Common myeloid progenitor, CD34-positive (primary cell): ENCODE measurements at regions of chr3 and their contacts with region 1.

Region 1: DNA sequence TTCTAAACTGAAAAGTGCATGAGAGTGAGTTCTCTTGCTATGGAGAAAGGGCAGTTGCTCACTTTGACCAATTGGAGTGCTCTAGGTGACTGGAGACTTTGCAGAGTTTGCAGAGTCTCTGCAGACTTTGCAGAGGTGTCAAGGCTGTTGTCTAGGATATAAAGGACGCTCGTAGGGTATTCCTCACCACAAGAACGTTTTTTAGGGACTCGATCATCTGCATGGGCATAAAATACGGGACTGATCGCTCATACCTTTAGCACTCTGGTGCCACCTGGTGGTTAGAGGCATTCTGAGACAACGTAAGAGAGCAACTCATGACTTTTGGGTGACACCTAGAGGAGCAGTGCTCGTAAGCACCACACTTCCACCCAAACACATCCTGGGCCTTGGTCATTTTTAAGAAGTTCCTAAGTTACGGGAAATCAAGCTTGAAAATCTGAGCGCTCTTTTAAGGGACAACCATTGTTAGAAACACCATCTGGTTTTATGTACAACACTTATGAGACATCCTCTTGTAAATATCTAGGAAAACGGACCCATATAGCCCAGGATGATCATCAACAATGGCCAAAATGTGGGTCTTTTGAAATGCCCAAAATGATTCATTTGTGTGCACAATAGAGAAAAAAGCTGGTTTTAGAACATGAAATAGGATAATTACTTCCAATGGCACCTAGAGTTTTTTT is 51.6 kb upstream of the XCR1 start:
- DNase-seq: peak; percentile 91 to 95 (median 92)
- H3K4me3 ChIP-seq: peak overlapping the region in 4 of 7 experiments; percentile 32 to 59 (median 48)
- H3K27ac ChIP-seq: no peak overlapping the region
- H3K4me1 ChIP-seq: peaks cover 0 to 2% (median 0%) of the 10 kb centered on the region in 4 experiments
- H3K27me3 ChIP-seq: no peaks in the 10 kb centered on the region

Region 2: GRCh38 chr3:45938864-45939263 is 140.0 kb before region 1 on chr3:
- CTCF ChIA-PET with region 1: interaction called, 212 read pairs
- POLR2A ChIA-PET with region 1: interaction called, 5 read pairs
- DNase-seq: peak; percentile 87 to 94 (median 91)
- H3K4me3 ChIP-seq: no peak overlapping the region
- H3K27ac ChIP-seq: no peak overlapping the region
- H3K4me1 ChIP-seq: peaks cover 0 to 20% (median 10%) of the 10 kb centered on the region in 4 experiments
- H3K27me3 ChIP-seq: no peaks in the 10 kb centered on the region

Region 3: GRCh38 chr3:45976191-45977091 is 102.4 kb before region 1 on chr3:
- CTCF ChIA-PET with region 1: interaction called, 20 read pairs
- POLR2A ChIA-PET with region 1: no interaction called
- DNase-seq: no peak
- H3K4me3 ChIP-seq: no peak overlapping the region
- H3K27ac ChIP-seq: no peak overlapping the region
- H3K4me1 ChIP-seq: peaks cover 7 to 36% (median 26%) of the 10 kb centered on the region in 4 experiments
- H3K27me3 ChIP-seq: no peaks in the 10 kb centered on the region

Region 4: DNA sequence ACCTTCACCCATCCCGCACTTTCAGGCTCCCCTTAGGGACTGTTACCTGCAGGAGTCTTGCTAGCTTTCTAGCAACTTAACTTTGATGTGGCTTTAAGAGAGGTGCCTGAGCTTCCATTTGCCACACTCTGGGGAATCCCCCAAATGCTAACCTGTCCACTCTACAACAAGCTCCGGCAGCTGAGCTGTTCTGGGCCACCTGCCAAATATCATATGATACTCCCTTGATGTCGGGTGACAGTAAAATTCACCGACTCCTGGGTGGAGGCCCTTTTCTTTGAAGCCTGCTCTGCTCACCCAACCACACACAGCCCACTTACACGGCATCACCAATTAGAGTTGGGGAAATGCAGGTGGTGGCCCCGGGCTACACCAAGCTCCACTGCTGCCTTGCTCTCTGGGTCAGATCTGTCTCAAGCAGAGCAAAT is 13.5 kb before region 1 on chr3:
- CTCF ChIA-PET with region 1: interaction called, 52 read pairs
- POLR2A ChIA-PET with region 1: no interaction called
- DNase-seq: peak in 2 of 3 donors; percentile 62 to 75
- H3K4me3 ChIP-seq: no peak overlapping the region
- H3K27ac ChIP-seq: no peak overlapping the region
- H3K4me1 ChIP-seq: peaks cover 0 to 14% (median under 1%) of the 10 kb centered on the region in 4 experiments
- H3K27me3 ChIP-seq: no peaks in the 10 kb centered on the region

Region 5: GRCh38 chr3:46208167-46208704 is 129.4 kb after region 1 on chr3 and contains the start of gene CCR1:
- CTCF ChIA-PET with region 1: interaction called, 27 read pairs
- POLR2A ChIA-PET with region 1: no interaction called
- DNase-seq: peak; percentile 53 to 91 (median 90)
- H3K4me3 ChIP-seq: peak within 1 kb of the TSS in 4 of 7 experiments; percentile 11 to 49 (median 30)
- H3K27ac ChIP-seq: no peak within 1 kb of the TSS
- H3K4me1 ChIP-seq: peaks cover 14 to 34% (median 26%) of the 10 kb centered on the region in 4 experiments
- H3K27me3 ChIP-seq: no peaks in the 10 kb centered on the region